ENCODE measurements at regions of chr22 and their contacts with region 1.

Region 1: GRCh38 chr22:38681784-38682335 is at the start of gene TOMM22:
- DNase-seq: peak; percentile 76 to 83
- ATAC-seq: peak; percentile 97 to 98
- H3K4me3 ChIP-seq: peak within 1 kb of the TSS; percentile 87 to 99 (median 92)
- H3K27ac ChIP-seq: peak within 1 kb of the TSS; percentile 76 to 94 (median 83)
- H3K4me1 ChIP-seq: peaks cover 6 to 13% of the 10 kb centered on the region in 2 donors
- H3K27me3 ChIP-seq: no peaks in the 10 kb centered on the region
- CTCF ChIP-seq: peak in 4 of 5 experiments; percentile 37 to 72 (median 56)
- POLR2A ChIP-seq: peak; percentile 54 to 59
- total RNA-seq, gene TOMM22: 37.1 to 47.1 (median 46.3) TPM

Region 2: DNA sequence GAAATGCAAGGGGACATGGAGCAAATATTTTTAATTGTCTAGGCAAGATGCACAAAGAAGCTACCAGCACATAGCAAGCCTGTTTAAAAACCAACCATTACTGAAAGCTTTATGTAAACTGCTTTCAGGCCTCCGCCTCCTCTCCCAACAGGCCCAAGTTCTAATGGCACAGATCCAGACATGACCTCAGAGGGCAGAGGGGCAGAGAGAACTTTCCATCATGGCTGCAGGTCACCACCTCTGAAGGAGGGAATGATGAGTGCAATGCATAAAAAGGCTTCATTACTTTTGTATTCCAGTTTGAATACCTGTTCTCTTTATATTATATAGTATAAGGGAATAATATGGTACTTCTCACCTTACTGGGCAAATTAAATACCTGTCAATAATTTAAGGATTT is 190.9 kb before region 1 on chr22:
- in situ Hi-C with region 1: no loop called
- intact Hi-C with region 1: loop called (anchors 10 kb)
- DNase-seq: no peak
- ATAC-seq: peak in 1 of 2 donors; percentile 64
- H3K4me3 ChIP-seq: no peak overlapping the region
- H3K27ac ChIP-seq: peak overlapping the region; percentile 52 to 73 (median 58)
- H3K4me1 ChIP-seq: peaks cover 9 to 11% of the 10 kb centered on the region in 2 donors
- H3K27me3 ChIP-seq: no peaks in the 10 kb centered on the region
- CTCF ChIP-seq: no peak
- POLR2A ChIP-seq: no peak